ENCODE measurements at regions of chr1 and their contacts with region 1.

Region 1: GRCh38 chr1:61049850-61050540 is 32.4 kb upstream of the NFIA start:
- DNase-seq: peak; percentile 87 to 93
- ATAC-seq: peak; percentile 91 to 92 (median 92)
- H3K4me3 ChIP-seq: peak overlapping the region; percentile 51
- H3K4me3 Mint-ChIP-seq: peak overlapping the region; percentile 76
- H3K27ac ChIP-seq: no peak overlapping the region
- H3K27ac Mint-ChIP-seq: no peak overlapping the region
- H3K4me1 ChIP-seq: peaks cover 32% of the 10 kb centered on the region
- H3K4me1 Mint-ChIP-seq: peaks cover 23 to 25% of the 10 kb centered on the region in 2 donors
- H3K27me3 ChIP-seq: peaks cover 33% of the 10 kb centered on the region
- H3K27me3 Mint-ChIP-seq: peaks cover 49 to 53% of the 10 kb centered on the region in 2 donors
- CTCF ChIP-seq: peak; percentile 92

Region 2: GRCh38 chr1:61005614-61006580 is 44.1 kb before region 1 on chr1:
- intact Hi-C with region 1: no loop called
- DNase-seq: no peak
- ATAC-seq: peak in 1 of 3 donors; percentile 37
- H3K4me3 ChIP-seq: no peak overlapping the region
- H3K4me3 Mint-ChIP-seq: no peak overlapping the region
- H3K27ac ChIP-seq: peak overlapping the region; percentile 46
- H3K27ac Mint-ChIP-seq: peak overlapping the region in 1 of 2 donors; percentile 7
- H3K4me1 ChIP-seq: peaks cover 7% of the 10 kb centered on the region
- H3K4me1 Mint-ChIP-seq: peaks cover 7 to 13% of the 10 kb centered on the region in 2 donors
- H3K27me3 ChIP-seq: no peaks in the 10 kb centered on the region
- H3K27me3 Mint-ChIP-seq: peaks cover 3 to 6% of the 10 kb centered on the region in 2 donors
- CTCF ChIP-seq: no peak

Region 3: DNA sequence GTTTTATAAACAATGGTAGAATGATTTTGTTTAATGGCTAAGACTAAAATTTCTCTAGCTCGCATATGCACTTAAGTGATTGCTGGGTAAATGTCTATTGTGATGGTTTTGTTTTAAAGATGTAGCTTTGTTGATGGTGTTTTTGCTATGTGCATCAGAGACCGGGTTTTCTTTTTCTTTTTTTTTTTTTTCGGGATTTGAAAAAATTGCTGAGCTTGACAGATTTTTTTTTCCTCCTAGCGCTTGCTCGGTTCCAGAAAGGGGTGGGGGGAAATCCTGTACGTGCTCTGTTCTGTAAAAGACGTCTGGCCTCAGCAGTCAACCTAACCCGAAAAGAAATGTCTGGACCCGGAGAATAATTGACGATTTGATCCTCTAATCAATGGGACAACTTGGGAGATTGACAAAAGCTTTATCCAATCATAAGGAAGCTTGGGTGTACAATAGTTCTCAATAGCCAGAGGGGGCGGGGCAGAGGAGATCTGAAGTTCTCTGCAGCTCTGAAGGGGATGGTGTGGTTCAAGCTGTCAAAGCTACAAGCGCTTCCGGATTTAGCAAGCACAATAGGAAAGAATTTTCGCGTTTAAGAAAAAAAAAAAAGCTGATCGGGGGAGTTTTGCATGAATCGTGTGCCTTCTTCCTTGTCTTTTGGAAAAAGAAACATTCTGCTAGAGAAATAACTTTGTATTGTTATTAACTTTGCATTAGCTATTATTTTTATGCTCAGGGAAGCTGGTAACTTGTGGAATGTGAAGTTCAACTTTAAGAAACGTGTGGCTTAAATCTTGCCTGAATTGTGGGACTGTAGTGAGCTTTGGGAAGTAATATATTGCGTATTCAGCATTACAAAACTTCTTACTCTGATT is 27.9 kb after region 1 on chr1:
- intact Hi-C with region 1: loop called (anchors 2 kb)
- DNase-seq: peak; percentile 72 to 98
- ATAC-seq: peak; percentile 72 to 82 (median 81)
- H3K4me3 ChIP-seq: peak overlapping the region; percentile 67
- H3K4me3 Mint-ChIP-seq: peak overlapping the region; percentile 96
- H3K27ac ChIP-seq: peak overlapping the region; percentile 63
- H3K27ac Mint-ChIP-seq: peak overlapping the region; percentile 90 to 96
- H3K4me1 ChIP-seq: peaks cover 21% of the 10 kb centered on the region
- H3K4me1 Mint-ChIP-seq: peaks cover 44 to 58% of the 10 kb centered on the region in 2 donors
- H3K27me3 ChIP-seq: peaks cover 3% of the 10 kb centered on the region
- H3K27me3 Mint-ChIP-seq: peaks cover 0 to 12% of the 10 kb centered on the region in 2 donors
- CTCF ChIP-seq: no peak

Region 4: DNA sequence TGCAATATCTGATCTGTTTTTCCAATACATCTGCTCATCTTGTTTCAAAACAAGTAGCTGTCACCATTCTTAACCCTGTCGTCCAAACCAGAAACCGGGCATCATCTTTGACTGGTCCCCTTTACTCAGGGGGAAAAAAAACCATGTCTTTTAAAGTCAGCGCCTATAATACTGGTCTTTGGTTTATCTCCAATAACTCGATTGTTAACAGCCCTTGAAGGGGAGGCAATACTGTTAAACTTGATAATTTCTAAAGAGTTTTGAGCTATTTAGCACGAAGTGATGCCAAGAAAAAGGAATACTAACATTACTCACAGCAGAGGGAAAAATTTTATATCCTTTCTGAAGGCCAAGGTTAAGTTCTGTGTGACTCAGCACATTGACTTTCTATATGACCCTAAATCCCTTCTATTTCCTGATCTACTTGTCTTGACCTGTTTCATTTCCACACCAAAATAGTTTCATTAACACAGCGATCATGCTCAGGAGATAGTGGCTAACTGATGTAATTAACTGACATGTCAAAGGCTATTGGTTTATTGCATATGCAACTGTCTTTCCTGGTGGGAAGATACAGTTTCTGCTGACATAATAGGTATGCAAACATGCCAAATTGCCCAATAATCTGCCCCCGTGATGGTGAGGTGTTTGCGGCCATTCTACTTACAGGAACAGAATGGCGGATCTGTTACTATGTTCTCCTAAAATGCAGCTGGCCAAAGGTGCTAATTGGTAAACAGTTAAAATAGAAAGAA is 91.5 kb after region 1 on chr1:
- intact Hi-C with region 1: loop called (anchors 10 kb)
- DNase-seq: no peak
- ATAC-seq: no peak
- H3K4me3 ChIP-seq: no peak overlapping the region
- H3K4me3 Mint-ChIP-seq: no peak overlapping the region
- H3K27ac ChIP-seq: no peak overlapping the region
- H3K27ac Mint-ChIP-seq: no peak overlapping the region
- H3K4me1 ChIP-seq: peaks cover 3% of the 10 kb centered on the region
- H3K4me1 Mint-ChIP-seq: peaks cover 8 to 13% of the 10 kb centered on the region in 2 donors
- H3K27me3 ChIP-seq: peaks cover 10% of the 10 kb centered on the region
- H3K27me3 Mint-ChIP-seq: peaks cover 36 to 89% of the 10 kb centered on the region in 2 donors
- CTCF ChIP-seq: no peak

Region 5: DNA sequence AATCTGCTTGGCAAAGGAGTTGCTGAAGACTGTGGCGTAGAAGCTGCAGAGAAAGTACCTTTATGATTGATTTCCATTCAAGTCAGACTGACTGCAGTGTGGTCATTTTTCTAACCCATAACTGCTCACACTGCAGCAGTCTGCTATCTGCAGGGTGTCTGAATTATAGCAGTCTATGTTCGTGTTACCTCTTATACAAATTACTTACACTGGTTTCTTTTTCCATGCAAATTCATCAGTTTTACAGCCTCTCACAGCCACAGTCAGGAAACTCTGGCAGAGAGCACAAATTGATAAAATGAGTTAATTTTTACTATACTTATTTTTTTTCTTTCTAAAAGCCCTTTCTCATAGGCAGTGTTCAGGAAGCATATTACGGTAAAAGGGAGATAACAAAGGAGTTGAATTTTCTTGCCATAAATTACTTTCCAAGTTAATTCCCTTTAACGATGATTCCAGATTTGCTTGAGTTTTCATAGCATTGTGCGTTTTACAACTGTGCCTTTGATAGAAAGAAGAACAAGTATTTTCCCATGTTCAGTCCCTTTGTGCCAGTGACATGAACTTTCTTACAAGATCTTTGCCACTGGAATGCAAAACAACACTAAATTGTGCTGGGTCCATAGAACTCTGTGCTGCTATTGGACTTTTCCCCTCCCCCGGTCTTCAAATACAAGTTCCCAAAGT is 293.9 kb after region 1 on chr1:
- intact Hi-C with region 1: loop called (anchors 10 kb)
- DNase-seq: no peak
- ATAC-seq: no peak
- H3K4me3 ChIP-seq: no peak overlapping the region
- H3K4me3 Mint-ChIP-seq: no peak overlapping the region
- H3K27ac ChIP-seq: no peak overlapping the region
- H3K27ac Mint-ChIP-seq: no peak overlapping the region
- H3K4me1 ChIP-seq: no peaks in the 10 kb centered on the region
- H3K4me1 Mint-ChIP-seq: peaks cover 1 to 20% of the 10 kb centered on the region in 2 donors
- H3K27me3 ChIP-seq: no peaks in the 10 kb centered on the region
- H3K27me3 Mint-ChIP-seq: peaks cover 9 to 22% of the 10 kb centered on the region in 2 donors
- CTCF ChIP-seq: no peak

Region 6: GRCh38 chr1:61641578-61642336 is 591.8 kb after region 1 on chr1:
- intact Hi-C with region 1: loop called (anchors 5 kb)
- DNase-seq: peak; percentile 32 to 54
- ATAC-seq: peak; percentile 81 to 99 (median 88)
- H3K4me3 ChIP-seq: peak overlapping the region; percentile 7
- H3K4me3 Mint-ChIP-seq: peak overlapping the region; percentile 70
- H3K27ac ChIP-seq: no peak overlapping the region
- H3K27ac Mint-ChIP-seq: peak overlapping the region in 1 of 2 donors; percentile 14
- H3K4me1 ChIP-seq: peaks cover 4% of the 10 kb centered on the region
- H3K4me1 Mint-ChIP-seq: peaks cover 11 to 12% of the 10 kb centered on the region in 2 donors
- H3K27me3 ChIP-seq: no peaks in the 10 kb centered on the region
- H3K27me3 Mint-ChIP-seq: peaks cover 11 to 13% of the 10 kb centered on the region in 2 donors
- CTCF ChIP-seq: peak; percentile 70